Activated B cell treated with CpG ODN at 0.5 μM for 24 hours (primary cell): ENCODE measurements at regions of chr3 and their contacts with region 1.

Region 1: GRCh38 chr3:197456261-197457091 is 99.3 kb downstream of the BDH1 start:
- DNase-seq: peak; percentile 42
- ATAC-seq: peak; percentile 66
- H3K4me3 Mint-ChIP-seq: peak overlapping the region; percentile 88
- H3K27ac Mint-ChIP-seq: peak overlapping the region; percentile 83
- H3K4me1 Mint-ChIP-seq: peaks cover 14% of the 10 kb centered on the region
- H3K27me3 Mint-ChIP-seq: no peaks in the 10 kb centered on the region
- CTCF ChIP-seq: no peak

Region 2: DNA sequence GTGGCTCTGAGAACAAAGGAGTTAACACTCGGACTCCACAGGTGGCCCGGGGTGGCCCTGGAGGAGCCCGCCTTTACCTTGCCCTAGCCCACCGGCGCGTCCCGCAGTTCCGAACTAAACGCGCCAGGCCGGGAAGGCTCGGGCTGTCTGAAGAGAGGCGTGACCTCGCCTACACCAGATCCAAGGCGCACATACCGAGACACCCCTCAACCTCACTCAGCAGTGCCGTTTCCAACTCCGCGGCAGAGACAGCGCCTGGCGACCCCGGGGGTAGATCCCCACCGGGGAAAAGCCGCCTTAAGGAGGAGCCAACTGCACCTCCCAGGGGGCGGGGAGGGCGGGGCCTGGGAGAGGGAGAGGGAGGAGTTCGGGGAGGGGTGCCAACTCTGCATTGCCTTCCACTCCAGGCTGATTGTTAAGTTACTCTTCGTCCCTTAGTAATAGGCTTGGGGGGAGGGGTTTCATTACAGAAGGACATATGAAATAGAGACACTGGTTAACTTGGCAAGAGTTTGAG is 158.1 kb before region 1 on chr3 and contains the start of gene DLG1:
- CTCF ChIA-PET with region 1: no interaction called
- POLR2A ChIA-PET with region 1: no interaction called
- intact Hi-C with region 1: loop called (anchors 2 kb)
- DNase-seq: no peak
- ATAC-seq: peak; percentile 79
- H3K4me3 Mint-ChIP-seq: peak within 1 kb of the TSS; percentile 92
- H3K27ac Mint-ChIP-seq: peak within 1 kb of the TSS; percentile 91
- H3K4me1 Mint-ChIP-seq: peaks cover 28% of the 10 kb centered on the region
- H3K27me3 Mint-ChIP-seq: peaks cover 17% of the 10 kb centered on the region
- CTCF ChIP-seq: no peak
- total RNA-seq, gene DLG1: 82.6 and 102 TPM in 2 replicates

Region 3: DNA sequence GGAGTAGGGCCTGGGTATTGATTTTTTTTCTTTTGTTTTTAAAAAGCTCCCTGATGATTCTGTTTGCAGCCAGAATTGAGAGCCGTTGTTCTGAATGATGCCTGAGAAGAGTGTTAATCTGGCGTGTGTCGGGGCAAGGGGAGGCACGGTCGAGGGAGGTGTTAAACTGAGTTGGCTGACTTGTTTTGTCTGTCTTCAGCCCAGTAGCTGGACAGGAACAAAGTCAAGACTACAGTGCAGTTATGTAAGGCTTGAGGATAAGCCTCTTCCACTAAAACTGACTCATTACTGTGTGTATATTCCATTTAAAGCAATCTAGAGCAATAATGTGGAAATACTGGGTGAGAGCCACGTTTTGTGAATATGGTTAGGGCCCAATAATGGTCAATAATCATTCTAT is 39.0 kb before region 1 on chr3:
- CTCF ChIA-PET with region 1: no interaction called
- POLR2A ChIA-PET with region 1: no interaction called
- intact Hi-C with region 1: loop called (anchors 1 kb)
- DNase-seq: no peak
- ATAC-seq: no peak
- H3K4me3 Mint-ChIP-seq: no peak overlapping the region
- H3K27ac Mint-ChIP-seq: no peak overlapping the region
- H3K4me1 Mint-ChIP-seq: no peaks in the 10 kb centered on the region
- H3K27me3 Mint-ChIP-seq: peaks cover 5% of the 10 kb centered on the region
- CTCF ChIP-seq: no peak

Region 4: GRCh38 chr3:197434830-197435229 is 21.6 kb before region 1 on chr3:
- CTCF ChIA-PET with region 1: no interaction called
- POLR2A ChIA-PET with region 1: no interaction called
- intact Hi-C with region 1: no loop called
- DNase-seq: no peak
- ATAC-seq: no peak
- H3K4me3 Mint-ChIP-seq: no peak overlapping the region
- H3K27ac Mint-ChIP-seq: no peak overlapping the region
- H3K4me1 Mint-ChIP-seq: no peaks in the 10 kb centered on the region
- H3K27me3 Mint-ChIP-seq: peaks cover 25% of the 10 kb centered on the region
- CTCF ChIP-seq: no peak